ENCODE measurements at regions of chrX and their contacts with region 1.

Region 1: GRCh38 chrX:103756736-103757135 is 19.9 kb upstream of the PLP1 start:
- DNase-seq: no peak
- H3K4me3 ChIP-seq: no peak overlapping the region
- H3K27ac ChIP-seq: no peak overlapping the region
- H3K4me1 ChIP-seq: no peaks in the 10 kb centered on the region
- H3K27me3 ChIP-seq: no peaks in the 10 kb centered on the region
- CTCF ChIP-seq: no peak

Region 2: DNA sequence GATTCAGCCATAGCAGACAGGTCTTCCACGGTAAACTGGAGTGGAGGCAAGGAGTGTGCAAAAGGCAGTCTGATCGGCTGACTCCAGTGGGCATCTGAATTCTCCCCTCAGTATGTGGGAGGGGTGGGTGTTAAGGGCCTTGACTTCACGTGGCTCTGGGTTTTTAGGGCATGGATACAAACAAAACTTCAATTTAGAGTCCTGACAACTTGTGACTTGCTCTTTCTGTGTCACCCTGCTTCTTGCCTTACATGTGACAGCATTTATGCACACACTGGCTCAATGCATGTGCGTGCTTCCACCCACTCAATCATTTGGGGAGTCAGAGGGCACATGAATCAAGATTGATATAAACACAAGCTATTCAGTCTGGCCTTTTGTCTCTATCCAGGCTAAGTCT is 37.4 kb after region 1 on chrX:
- intact Hi-C with region 1: loop called (anchors 2 kb)
- DNase-seq: no peak
- H3K4me3 ChIP-seq: no peak overlapping the region
- H3K27ac ChIP-seq: no peak overlapping the region
- H3K4me1 ChIP-seq: peaks cover 0 to 4% (median 0%) of the 10 kb centered on the region in 4 donors
- H3K27me3 ChIP-seq: no peaks in the 10 kb centered on the region
- CTCF ChIP-seq: no peak

Region 3: DNA sequence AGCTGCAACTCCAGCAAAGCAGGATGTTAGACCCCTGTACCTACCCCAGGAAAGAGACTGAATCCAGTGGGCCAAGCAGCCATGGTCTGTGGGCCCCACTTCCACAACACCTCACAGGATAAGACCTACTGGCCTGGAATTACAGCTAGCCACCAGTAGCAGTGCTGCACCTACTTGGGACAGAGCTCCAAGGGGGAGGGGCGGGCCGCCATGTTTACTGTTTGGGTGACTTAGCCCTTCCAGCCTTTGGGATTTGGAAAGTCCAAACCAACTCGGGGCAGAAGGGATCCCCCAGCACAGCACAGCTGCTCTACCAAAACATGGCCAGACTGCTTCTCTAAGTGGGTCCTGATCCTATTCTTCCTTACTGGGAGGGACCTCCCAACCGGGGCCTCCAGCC is 196.6 kb after region 1 on chrX:
- intact Hi-C with region 1: no loop called
- DNase-seq: no peak
- H3K4me3 ChIP-seq: no peak overlapping the region
- H3K27ac ChIP-seq: no peak overlapping the region
- H3K4me1 ChIP-seq: no peaks in the 10 kb centered on the region
- H3K27me3 ChIP-seq: no peaks in the 10 kb centered on the region
- CTCF ChIP-seq: no peak

Region 4: DNA sequence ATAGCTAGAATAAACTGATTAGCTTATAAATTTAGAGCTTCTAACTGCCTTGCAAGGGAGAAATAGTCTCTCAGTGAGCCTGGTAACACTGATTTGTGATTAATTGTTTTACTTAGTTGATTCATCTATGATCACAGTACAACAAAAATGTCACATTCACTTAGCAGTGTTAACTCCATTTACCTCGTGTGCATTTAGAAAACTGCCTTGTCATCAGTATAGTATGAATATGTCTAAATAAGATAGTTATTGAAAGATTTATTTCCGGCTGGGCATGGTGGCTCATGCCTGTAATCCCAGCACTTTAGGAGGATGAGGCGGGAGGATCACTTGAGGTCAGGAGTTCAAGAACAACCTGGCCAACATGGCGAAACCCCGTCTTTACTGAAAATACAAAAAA is 448.8 kb after region 1 on chrX:
- intact Hi-C with region 1: no loop called
- DNase-seq: no peak
- H3K4me3 ChIP-seq: no peak overlapping the region
- H3K27ac ChIP-seq: no peak overlapping the region
- H3K4me1 ChIP-seq: no peaks in the 10 kb centered on the region
- H3K27me3 ChIP-seq: no peaks in the 10 kb centered on the region
- CTCF ChIP-seq: no peak

Measured in tibial artery (tissue), 4 donors.